Naive thymus-derived CD4-positive, alpha-beta T cell (primary cell): ENCODE measurements at regions of chr2 and their contacts with region 1.

Region 1: DNA sequence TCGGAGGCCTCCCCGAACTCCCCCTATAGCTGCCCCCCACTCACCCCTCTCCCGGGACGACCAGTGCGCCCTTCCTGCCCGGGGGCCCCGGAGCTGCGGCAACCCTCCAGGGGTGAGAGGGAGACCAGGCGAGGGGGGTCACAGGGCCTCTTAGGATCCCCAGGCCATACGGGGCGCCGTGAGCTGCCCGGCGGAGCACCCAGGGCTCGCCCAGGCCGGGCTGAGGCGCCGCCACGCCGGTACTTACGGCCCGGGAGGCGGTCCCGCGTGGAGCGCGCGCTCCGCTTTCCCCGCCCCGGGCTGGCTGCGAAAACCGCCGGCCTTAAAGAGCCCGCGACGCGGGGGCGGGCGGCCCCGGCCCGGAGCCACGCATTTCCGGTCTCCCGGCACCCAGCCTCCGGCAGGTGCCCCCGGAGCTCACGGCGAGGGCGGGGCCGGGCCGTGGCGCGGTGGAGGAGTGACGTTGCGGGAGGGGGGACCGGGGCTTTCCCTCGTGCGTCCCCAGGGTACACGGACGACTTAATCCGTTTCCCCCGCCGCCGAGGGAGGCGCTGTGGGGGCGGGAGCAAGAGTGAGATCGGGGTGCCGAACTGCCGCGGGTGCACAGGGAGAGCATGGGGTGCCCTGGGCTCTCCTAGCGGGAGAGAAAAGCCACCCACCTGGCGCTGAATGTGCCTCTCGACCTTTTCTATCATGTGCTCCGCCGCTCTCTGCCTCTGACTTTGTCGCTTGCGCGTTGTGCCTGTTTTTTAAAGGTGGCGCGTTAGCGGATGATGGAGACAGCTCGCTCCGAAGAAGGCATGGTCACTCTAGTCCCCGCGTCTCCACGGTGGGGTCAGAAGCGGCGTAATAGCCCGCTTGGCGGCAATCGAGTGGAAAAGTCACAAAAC is at the start of gene METTL21A:
- DNase-seq: peak; percentile 91 to 97 (median 95)
- ATAC-seq: peak; percentile 91
- H3K4me3 ChIP-seq: peak within 1 kb of the TSS; percentile 92
- H3K4me3 Mint-ChIP-seq: peak within 1 kb of the TSS; percentile 93 to 96 (median 94)
- H3K27ac ChIP-seq: peak within 1 kb of the TSS; percentile 99
- H3K27ac Mint-ChIP-seq: peak within 1 kb of the TSS; percentile 86 to 96 (median 95)
- H3K4me1 ChIP-seq: peaks cover 4 to 10% of the 10 kb centered on the region in 2 donors
- H3K4me1 Mint-ChIP-seq: peaks cover 32 to 52% (median 40%) of the 10 kb centered on the region in 7 donors
- H3K27me3 ChIP-seq: no peaks in the 10 kb centered on the region
- H3K27me3 Mint-ChIP-seq: peaks cover 0 to 2% (median 0%) of the 10 kb centered on the region in 5 donors
- total RNA-seq, gene METTL21A: 14.6 to 20.5 (median 19.6) TPM

Region 2: GRCh38 chr2:206274434-206275268 is 1350.6 kb before region 1 on chr2 and contains the start of gene ZDBF2:
- CTCF ChIA-PET with region 1: no interaction called
- POLR2A ChIA-PET with region 1: no interaction called
- intact Hi-C with region 1: loop called in 1 of 2 experiments (anchors 10 kb)
- DNase-seq: peak; percentile 29 to 70 (median 62)
- ATAC-seq: peak; percentile 80
- H3K4me3 ChIP-seq: peak within 1 kb of the TSS; percentile 56
- H3K4me3 Mint-ChIP-seq: peak within 1 kb of the TSS; percentile 85 to 94 (median 91)
- H3K27ac ChIP-seq: peak within 1 kb of the TSS; percentile 79
- H3K27ac Mint-ChIP-seq: peak within 1 kb of the TSS; percentile 85 to 96 (median 94)
- H3K4me1 ChIP-seq: peaks cover 8 to 14% of the 10 kb centered on the region in 2 donors
- H3K4me1 Mint-ChIP-seq: peaks cover 9 to 25% (median 20%) of the 10 kb centered on the region in 7 donors
- H3K27me3 ChIP-seq: peaks cover 0 to 6% of the 10 kb centered on the region in 2 donors
- H3K27me3 Mint-ChIP-seq: peaks cover 14 to 69% (median 51%) of the 10 kb centered on the region in 5 donors
- total RNA-seq, gene ZDBF2: 9.1 to 22.4 (median 16.0) TPM

Region 3: DNA sequence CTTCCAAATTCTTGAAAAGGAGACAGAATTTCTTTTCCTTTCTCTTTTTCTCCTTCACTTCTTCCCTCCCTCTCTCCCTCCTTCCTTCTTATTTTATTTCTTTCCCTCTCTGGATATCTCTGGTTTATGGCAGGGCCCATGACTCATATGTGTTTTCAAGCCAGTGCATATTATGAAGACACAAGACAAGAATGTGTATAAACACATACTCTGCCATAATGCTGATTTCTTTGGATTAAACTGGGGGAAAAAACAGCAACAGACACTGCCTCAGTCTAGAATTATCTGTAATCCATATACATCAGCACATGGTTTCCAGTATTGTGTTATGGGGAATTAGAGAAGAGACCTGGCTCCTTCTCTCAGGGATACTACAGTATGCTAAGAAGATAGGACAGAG is 768.8 kb before region 1 on chr2:
- CTCF ChIA-PET with region 1: no interaction called
- POLR2A ChIA-PET with region 1: no interaction called
- intact Hi-C with region 1: loop called in 1 of 2 experiments (anchors 1 kb)
- DNase-seq: no peak
- ATAC-seq: no peak
- H3K4me3 ChIP-seq: no peak overlapping the region
- H3K4me3 Mint-ChIP-seq: no peak overlapping the region
- H3K27ac ChIP-seq: no peak overlapping the region
- H3K27ac Mint-ChIP-seq: peak overlapping the region in 2 of 9 donors; percentile 23 to 60
- H3K4me1 ChIP-seq: peaks cover 7 to 18% of the 10 kb centered on the region in 2 donors
- H3K4me1 Mint-ChIP-seq: peaks cover 19 to 33% (median 25%) of the 10 kb centered on the region in 7 donors
- H3K27me3 ChIP-seq: no peaks in the 10 kb centered on the region
- H3K27me3 Mint-ChIP-seq: no peaks in the 10 kb centered on the region

Region 4: DNA sequence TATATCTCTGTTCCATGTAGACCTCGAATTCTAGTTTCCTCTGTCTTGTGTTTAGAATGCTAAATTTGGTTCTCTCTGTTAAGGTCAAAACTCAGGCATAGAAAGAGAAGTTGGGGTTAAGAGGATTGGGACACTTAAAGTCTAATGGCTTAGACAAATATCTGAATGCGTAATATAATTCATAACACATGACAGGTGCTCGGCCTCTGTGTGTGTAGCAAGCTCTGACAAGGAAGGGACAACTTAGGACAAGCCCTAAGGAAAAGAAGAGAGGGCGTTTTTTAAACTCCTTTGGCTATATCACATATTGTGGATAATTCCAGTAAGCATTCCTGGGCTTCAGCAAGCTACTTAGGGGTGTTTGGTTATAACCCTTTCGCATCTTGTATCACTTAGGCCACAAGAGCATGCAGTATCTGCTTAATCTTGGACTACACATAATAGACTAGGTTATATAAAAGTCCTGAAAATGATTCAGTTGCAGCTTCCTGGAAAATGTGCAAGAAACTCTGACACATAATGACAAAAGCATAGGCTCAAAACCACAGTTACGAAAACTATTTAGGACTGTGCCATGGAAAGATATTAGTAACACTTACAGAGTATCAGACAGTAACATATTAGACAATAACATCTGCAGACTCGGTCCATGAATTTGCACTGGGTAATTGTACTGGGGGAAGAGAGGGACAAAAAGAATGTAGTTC is 111.6 kb before region 1 on chr2:
- CTCF ChIA-PET with region 1: no interaction called
- POLR2A ChIA-PET with region 1: no interaction called
- intact Hi-C with region 1: no loop called
- DNase-seq: no peak
- ATAC-seq: no peak
- H3K4me3 ChIP-seq: no peak overlapping the region
- H3K4me3 Mint-ChIP-seq: no peak overlapping the region
- H3K27ac ChIP-seq: no peak overlapping the region
- H3K27ac Mint-ChIP-seq: peak overlapping the region in 1 of 9 donors; percentile 39
- H3K4me1 ChIP-seq: no peaks in the 10 kb centered on the region
- H3K4me1 Mint-ChIP-seq: peaks cover 0 to 20% (median 6%) of the 10 kb centered on the region in 7 donors
- H3K27me3 ChIP-seq: no peaks in the 10 kb centered on the region
- H3K27me3 Mint-ChIP-seq: peaks cover 0 to 11% (median 0%) of the 10 kb centered on the region in 5 donors

Region 5: DNA sequence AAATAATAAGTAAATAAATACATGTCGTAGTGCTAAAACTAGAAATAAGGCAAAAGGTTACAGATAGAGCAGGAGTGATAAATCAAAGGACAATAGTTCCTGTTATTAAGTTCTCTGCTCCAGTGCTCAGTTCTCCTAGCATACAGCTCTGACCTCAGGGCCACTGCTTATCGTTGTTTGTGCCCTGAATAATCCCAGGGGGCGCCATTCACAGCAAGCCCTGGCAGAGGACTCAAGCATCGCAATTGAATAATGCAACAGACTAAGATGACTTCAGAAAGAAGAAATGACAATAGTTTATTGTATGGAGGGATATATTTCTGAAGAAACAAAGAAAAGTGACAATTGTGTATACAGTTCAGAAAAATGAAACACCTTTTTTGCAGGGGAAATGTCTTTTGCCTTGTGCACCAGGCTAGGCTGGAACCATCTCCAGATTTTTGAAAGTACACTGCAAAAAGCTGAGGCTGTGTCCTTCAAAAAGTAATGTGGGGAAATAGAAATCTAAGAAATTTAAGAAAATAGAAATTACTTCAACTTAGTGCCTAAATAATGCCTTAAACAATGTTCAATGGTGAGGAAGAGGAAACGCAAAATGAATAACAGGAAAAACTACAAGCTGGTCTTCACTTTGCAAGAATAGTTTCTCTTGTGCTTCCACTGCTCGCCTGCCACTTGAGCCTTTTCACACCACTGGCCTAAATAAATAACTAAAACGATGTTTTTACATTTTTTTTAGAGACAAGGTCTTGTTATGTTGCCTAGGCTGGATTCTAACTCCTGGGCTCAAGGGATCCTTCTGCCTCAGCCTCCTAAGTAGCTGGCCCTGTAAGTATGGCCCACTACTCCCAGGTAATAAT is 67.2 kb after region 1 on chr2:
- CTCF ChIA-PET with region 1: interaction called, 6 read pairs
- POLR2A ChIA-PET with region 1: no interaction called
- intact Hi-C with region 1: loop called in 1 of 2 experiments (anchors 5 kb)
- DNase-seq: peak in 8 of 9 donors; percentile 21 to 58 (median 41)
- ATAC-seq: peak; percentile 82
- H3K4me3 ChIP-seq: no peak overlapping the region
- H3K4me3 Mint-ChIP-seq: peak overlapping the region in 2 of 10 donors; percentile 35 to 56
- H3K27ac ChIP-seq: no peak overlapping the region
- H3K27ac Mint-ChIP-seq: no peak overlapping the region
- H3K4me1 ChIP-seq: no peaks in the 10 kb centered on the region
- H3K4me1 Mint-ChIP-seq: peaks cover 0 to 6% (median 5%) of the 10 kb centered on the region in 7 donors
- H3K27me3 ChIP-seq: no peaks in the 10 kb centered on the region
- H3K27me3 Mint-ChIP-seq: peaks cover 0 to 5% (median 0%) of the 10 kb centered on the region in 5 donors

Region 6: DNA sequence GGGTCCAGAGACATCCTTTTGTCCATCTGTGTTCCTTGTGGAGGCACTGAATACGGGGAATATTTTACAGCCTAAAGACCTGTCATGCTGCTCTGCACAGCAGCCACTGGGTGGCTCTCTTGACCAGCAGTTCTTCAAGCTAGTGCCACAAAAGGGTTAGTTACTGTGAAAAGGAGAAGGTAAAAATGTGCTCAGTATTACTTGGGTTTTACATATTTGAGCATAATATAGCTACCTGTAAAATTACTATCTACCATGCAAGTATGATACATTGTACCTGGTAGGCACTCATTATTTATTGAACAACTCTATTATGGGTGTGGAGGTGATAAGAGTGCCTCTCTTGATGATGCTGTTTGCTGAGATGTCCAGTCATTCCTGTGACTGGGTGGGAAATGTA is 120.9 kb after region 1 on chr2:
- CTCF ChIA-PET with region 1: interaction called, 13 read pairs
- POLR2A ChIA-PET with region 1: no interaction called
- intact Hi-C with region 1: no loop called
- DNase-seq: peak in 7 of 9 donors; percentile 17 to 50 (median 34)
- ATAC-seq: peak; percentile 85
- H3K4me3 ChIP-seq: no peak overlapping the region
- H3K4me3 Mint-ChIP-seq: no peak overlapping the region
- H3K27ac ChIP-seq: no peak overlapping the region
- H3K27ac Mint-ChIP-seq: peak overlapping the region in 1 of 9 donors; percentile 20
- H3K4me1 ChIP-seq: no peaks in the 10 kb centered on the region
- H3K4me1 Mint-ChIP-seq: no peaks in the 10 kb centered on the region
- H3K27me3 ChIP-seq: no peaks in the 10 kb centered on the region
- H3K27me3 Mint-ChIP-seq: no peaks in the 10 kb centered on the region

Region 7: GRCh38 chr2:208025037-208025813 is 400.0 kb after region 1 on chr2 and contains the start of gene PLEKHM3:
- CTCF ChIA-PET with region 1: interaction called, 3 read pairs
- POLR2A ChIA-PET with region 1: interaction called, 17 read pairs
- intact Hi-C with region 1: loop called (anchors 1 kb)
- DNase-seq: peak; percentile 12 to 80 (median 62)
- ATAC-seq: peak; percentile 93
- H3K4me3 ChIP-seq: peak within 1 kb of the TSS; percentile 88
- H3K4me3 Mint-ChIP-seq: peak within 1 kb of the TSS; percentile 85 to 100 (median 96)
- H3K27ac ChIP-seq: peak within 1 kb of the TSS; percentile 76
- H3K27ac Mint-ChIP-seq: peak within 1 kb of the TSS; percentile 89 to 98 (median 94)
- H3K4me1 ChIP-seq: peaks cover 0 to 4% of the 10 kb centered on the region in 2 donors
- H3K4me1 Mint-ChIP-seq: peaks cover 12 to 34% (median 27%) of the 10 kb centered on the region in 7 donors
- H3K27me3 ChIP-seq: no peaks in the 10 kb centered on the region
- H3K27me3 Mint-ChIP-seq: no peaks in the 10 kb centered on the region
- total RNA-seq, gene PLEKHM3: 6.1 to 19.4 (median 15.5) TPM

Region 8: DNA sequence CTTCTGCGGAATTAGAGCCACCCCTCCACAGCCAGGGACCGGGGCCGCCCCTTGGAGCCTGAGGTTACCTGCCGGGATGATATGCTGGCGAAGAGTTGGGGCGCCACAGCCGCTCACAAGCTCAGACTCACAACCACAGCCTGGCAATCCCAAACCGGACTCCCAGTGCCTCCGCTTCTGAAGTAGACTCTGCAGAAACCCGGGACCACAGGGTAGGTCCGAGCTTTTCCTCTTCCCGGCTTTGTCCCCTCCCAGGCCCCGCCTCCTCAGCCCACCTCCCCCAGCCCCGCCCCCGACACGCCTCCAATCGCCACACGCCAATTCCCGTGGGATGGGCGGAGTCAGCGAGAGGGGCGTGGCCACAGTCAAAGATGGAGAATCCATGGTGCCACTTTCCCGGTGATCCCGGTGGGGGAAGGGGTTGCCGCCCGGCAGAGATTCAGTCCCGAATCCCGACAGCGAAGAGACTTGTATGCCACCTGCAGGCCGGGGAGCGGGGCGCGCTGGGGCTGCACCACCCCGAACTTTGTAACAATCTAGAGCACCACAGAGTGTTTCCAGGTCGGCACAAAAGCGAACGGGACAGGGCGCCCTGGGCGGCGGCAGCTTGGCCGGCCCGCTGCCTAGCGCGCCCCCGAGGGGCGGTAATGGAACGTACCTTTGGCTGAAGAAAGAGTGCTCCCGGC is 629.8 kb after region 1 on chr2 and contains the start of gene IDH1:
- CTCF ChIA-PET with region 1: no interaction called
- POLR2A ChIA-PET with region 1: no interaction called
- intact Hi-C with region 1: loop called in 1 of 2 experiments (anchors 2 kb)
- DNase-seq: peak; percentile 79 to 97 (median 88)
- ATAC-seq: peak; percentile 95
- H3K4me3 ChIP-seq: peak within 1 kb of the TSS; percentile 70
- H3K4me3 Mint-ChIP-seq: peak within 1 kb of the TSS; percentile 93 to 100 (median 97)
- H3K27ac ChIP-seq: peak within 1 kb of the TSS; percentile 62
- H3K27ac Mint-ChIP-seq: peak within 1 kb of the TSS; percentile 47 to 91 (median 79)
- H3K4me1 ChIP-seq: peaks cover 0 to 9% of the 10 kb centered on the region in 2 donors
- H3K4me1 Mint-ChIP-seq: peaks cover 8 to 28% (median 23%) of the 10 kb centered on the region in 7 donors
- H3K27me3 ChIP-seq: no peaks in the 10 kb centered on the region
- H3K27me3 Mint-ChIP-seq: peaks cover 0 to 3% (median 0%) of the 10 kb centered on the region in 5 donors
- total RNA-seq, gene IDH1: 5.0 to 26.4 (median 20.4) TPM